Lower lobe of right lung (tissue), 2 donors: ENCODE measurements at regions of chrX and their contacts with region 1.

Region 1: GRCh38 chrX:130079824-130080406 is 30.4 kb downstream of the ELF4 start:
- DNase-seq: no peak
- ATAC-seq: peak; percentile 36 to 58
- H3K4me3 ChIP-seq: no peak overlapping the region
- H3K27ac ChIP-seq: no peak overlapping the region
- H3K4me1 ChIP-seq: peaks cover 28% of the 10 kb centered on the region
- H3K27me3 ChIP-seq: no peaks in the 10 kb centered on the region
- CTCF ChIP-seq: peak; percentile 65

Region 2: DNA sequence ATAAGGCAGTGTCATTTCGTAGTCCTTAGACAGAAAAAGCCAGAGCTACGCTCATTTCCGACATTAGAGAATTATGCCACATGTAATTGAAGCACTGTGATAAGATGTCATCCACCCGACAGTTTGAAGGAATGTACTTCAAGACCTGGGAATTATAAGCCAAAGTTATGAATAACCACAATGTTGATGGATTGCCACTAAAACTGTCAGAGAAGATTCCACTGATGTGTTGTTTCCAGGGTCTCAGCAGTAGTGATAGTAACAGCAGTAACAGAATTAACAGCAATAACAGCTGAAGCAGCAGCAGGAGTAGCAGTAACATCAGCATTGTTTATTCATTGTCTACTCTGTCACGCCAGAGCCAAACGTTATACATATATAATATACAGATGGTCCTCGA is 116.6 kb after region 1 on chrX:
- intact Hi-C with region 1: loop called (anchors 10 kb)
- DNase-seq: no peak
- ATAC-seq: no peak
- H3K4me3 ChIP-seq: no peak overlapping the region
- H3K27ac ChIP-seq: no peak overlapping the region
- H3K4me1 ChIP-seq: no peaks in the 10 kb centered on the region
- H3K27me3 ChIP-seq: no peaks in the 10 kb centered on the region
- CTCF ChIP-seq: no peak

Region 3: DNA sequence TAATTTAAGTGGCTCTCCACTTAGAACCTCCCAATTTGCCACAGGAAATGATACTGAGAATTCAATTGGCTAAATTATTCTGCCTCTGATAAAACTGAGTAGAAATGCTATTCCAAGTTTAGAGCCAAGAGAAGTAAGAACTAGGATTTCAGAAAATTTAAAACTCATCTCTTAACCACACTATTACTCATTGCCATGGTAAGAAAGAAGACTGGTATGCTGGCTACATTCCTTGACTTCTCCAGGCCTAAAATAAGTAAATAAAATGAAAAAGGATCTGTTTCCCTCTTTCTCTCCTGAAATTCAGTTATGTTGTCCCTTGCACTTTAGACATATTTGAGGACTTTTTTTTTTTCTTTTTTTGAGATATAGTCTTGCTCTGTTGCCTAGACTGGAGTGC is 165.5 kb after region 1 on chrX:
- intact Hi-C with region 1: no loop called
- DNase-seq: no peak
- ATAC-seq: no peak
- H3K4me3 ChIP-seq: no peak overlapping the region
- H3K27ac ChIP-seq: no peak overlapping the region
- H3K4me1 ChIP-seq: no peaks in the 10 kb centered on the region
- H3K27me3 ChIP-seq: no peaks in the 10 kb centered on the region
- CTCF ChIP-seq: no peak